Right cardiac atrium (tissue), 5 donors: ENCODE measurements at regions of chr17 and their contacts with region 1.

Region 1: DNA sequence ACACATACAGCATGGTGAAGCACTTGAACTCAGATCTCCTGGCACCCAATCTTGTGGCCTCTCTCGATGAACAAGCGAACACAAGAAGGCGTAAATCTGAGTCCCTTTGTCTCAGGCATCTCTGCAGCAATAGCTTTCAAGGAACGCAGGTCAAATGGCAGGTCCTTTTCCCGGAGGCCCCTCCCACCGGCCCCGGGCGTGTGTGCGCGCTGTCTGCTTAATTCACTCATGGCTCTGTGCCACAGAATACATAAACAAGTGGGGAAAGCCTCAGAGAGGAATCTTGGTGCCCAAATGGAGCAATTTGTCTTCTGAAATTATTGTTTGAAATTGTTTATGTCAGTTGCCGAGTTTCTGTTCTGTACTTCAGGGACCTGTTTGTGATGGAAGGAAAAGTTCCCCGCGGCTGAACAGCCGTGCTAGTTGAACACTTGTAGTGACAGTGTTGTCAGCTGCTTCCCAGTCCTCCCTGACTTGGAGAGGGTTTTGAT is 14.8 kb downstream of the MYOCD start:
- DNase-seq: peak in 1 of 3 donors; percentile 49
- ATAC-seq: no peak
- H3K4me3 ChIP-seq: no peak overlapping the region
- H3K27ac ChIP-seq: peak overlapping the region; percentile 11
- H3K4me1 ChIP-seq: peaks cover 3% of the 10 kb centered on the region
- H3K27me3 ChIP-seq: no peaks in the 10 kb centered on the region

Region 2: GRCh38 chr17:12730931-12731521 is 50.6 kb after region 1 on chr17:
- intact Hi-C with region 1: loop called in 1 of 4 experiments (anchors 5 kb)
- DNase-seq: peak; percentile 82 to 93 (median 90)
- ATAC-seq: peak; percentile 88 to 89
- H3K4me3 ChIP-seq: no peak overlapping the region
- H3K27ac ChIP-seq: peak overlapping the region; percentile 90
- H3K4me1 ChIP-seq: peaks cover 9% of the 10 kb centered on the region
- H3K27me3 ChIP-seq: no peaks in the 10 kb centered on the region